T47D (cell line): ENCODE measurements at regions of chr5 and their contacts with region 1.

Region 1: GRCh38 chr5:36870399-36871040 is 6.0 kb upstream of the NIPBL start:
- DNase-seq: peak; percentile 49 to 82

Region 2: DNA sequence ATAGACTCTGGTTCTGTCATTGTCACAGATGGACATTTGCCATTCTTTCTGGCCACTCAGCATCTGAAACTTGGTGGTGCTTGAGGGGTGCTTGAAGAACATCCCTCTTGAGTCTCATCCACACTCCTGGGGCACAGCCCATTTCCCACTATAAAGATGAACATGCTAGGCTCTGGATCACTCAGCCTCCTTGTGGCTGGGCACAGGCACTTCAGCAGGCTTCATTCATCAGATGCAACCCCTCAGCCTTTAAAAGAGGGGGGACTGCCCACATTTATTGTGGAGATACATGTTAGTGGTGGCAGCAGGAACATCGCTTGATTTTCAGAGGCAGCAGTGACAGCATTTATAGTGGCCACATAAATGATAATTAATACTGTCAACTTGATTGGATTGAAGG is 118.6 kb before region 1 on chr5:
- in situ Hi-C with region 1: loop called (anchors 25 kb)
- DNase-seq: peak in 1 of 2 experiments; percentile 35

Region 3: GRCh38 chr5:36934740-36935356 is 64.3 kb after region 1 on chr5:
- in situ Hi-C with region 1: no loop called
- DNase-seq: no peak

Region 4: DNA sequence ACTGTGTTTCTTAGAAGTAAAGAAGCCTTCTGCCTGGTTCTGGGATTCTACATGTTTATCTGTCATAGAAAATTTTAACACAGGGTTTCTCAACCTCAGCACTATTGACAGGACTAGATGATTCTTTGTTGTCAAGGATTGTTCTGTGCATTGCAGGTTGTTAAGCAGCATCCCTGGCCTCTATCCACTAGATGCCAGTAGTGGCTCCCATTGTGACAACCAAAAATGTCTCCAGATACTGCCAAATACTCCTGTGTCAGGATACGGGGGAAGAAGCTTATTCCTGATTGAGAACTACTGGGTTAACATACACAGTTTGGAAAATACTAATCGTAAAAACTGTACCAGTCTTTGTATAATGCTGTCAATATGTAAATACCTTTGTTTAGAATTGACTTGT is 173.2 kb after region 1 on chr5:
- in situ Hi-C with region 1: no loop called
- DNase-seq: peak in 1 of 2 experiments; percentile 51